CD4-positive, alpha-beta T cell (primary cell): ENCODE measurements at regions of chr3 and their contacts with region 1.

Region 1: DNA sequence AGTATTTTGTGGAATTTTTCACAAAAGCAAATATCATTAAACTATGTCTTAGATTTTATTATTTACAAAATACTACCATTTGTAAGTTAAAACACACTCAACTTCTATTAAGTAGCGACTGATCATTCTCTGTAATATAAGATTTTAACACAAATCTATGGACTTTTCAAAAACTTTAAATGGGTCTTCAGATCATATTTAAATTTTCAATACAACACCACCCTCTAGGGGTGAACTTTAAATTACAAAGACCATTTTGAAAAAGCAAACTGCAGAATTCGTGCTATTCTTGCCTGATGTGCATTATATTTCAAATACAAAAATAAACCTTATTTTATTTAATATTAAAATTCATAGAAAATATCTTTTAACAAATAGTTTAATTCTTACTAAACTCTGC is 8.2 kb upstream of the VGLL4 start:
- DNase-seq: peak in 3 of 14 experiments; percentile 57 to 69 (median 65)
- ATAC-seq: no peak
- H3K4me3 ChIP-seq: no peak overlapping the region
- H3K4me3 Mint-ChIP-seq: no peak overlapping the region
- H3K27ac ChIP-seq: no peak overlapping the region
- H3K27ac Mint-ChIP-seq: no peak overlapping the region
- H3K4me1 ChIP-seq: peaks cover 3% of the 10 kb centered on the region
- H3K4me1 Mint-ChIP-seq: peaks cover 4% of the 10 kb centered on the region
- H3K27me3 ChIP-seq: no peaks in the 10 kb centered on the region
- H3K27me3 Mint-ChIP-seq: no peaks in the 10 kb centered on the region
- CTCF ChIP-seq: peak; percentile 77

Region 2: GRCh38 chr3:10758304-10759061 is 893.4 kb before region 1 on chr3:
- CTCF ChIA-PET with region 1: no interaction called
- POLR2A ChIA-PET with region 1: no interaction called
- intact Hi-C with region 1: loop called in 1 of 2 experiments (anchors 5 kb)
- DNase-seq: peak in 11 of 14 experiments; percentile 11 to 70 (median 33)
- ATAC-seq: peak; percentile 65
- H3K4me3 ChIP-seq: no peak overlapping the region
- H3K4me3 Mint-ChIP-seq: no peak overlapping the region
- H3K27ac ChIP-seq: no peak overlapping the region
- H3K27ac Mint-ChIP-seq: no peak overlapping the region
- H3K4me1 ChIP-seq: no peaks in the 10 kb centered on the region
- H3K4me1 Mint-ChIP-seq: no peaks in the 10 kb centered on the region
- H3K27me3 ChIP-seq: peaks cover 7 to 14% of the 10 kb centered on the region in 2 experiments
- H3K27me3 Mint-ChIP-seq: peaks cover 80% of the 10 kb centered on the region
- CTCF ChIP-seq: peak; percentile 64

Region 3: DNA sequence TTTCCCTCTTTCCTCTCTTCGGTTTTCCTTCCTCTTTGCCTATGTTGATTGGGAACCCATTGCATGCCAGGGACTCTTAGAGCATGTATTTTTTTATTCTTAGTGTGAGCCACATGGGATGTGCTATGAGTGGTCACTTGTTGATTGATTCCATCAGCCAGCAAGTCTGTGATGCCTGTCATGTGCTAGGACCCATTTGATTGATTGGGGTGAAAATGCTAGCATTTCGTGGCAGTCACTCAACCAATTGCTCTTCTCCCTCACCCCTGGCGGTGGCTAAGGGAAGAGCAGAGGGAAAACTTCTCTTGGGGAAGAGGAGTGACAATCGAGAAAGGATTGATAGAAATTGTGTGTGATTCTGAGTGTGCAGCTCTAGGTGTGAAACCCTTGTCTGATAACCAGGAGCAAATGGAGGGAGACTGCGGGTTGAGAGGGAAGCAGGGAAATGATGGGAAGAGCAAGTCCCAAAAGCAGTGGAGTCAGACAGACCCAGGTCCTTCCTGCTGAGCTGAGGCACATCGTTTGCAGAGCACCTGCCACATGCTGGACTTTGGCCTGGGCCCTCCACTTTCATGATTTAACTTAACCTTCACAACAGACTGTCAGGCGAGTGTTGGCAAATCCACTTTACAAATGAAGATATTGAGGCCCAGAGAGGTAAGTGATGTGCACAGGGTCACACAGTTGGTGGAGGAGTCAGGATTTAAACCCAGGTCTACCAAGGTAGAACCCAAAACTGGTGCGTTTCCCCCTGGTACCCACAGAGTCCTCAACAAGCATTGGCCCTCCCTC is 795.8 kb before region 1 on chr3:
- CTCF ChIA-PET with region 1: no interaction called
- POLR2A ChIA-PET with region 1: no interaction called
- intact Hi-C with region 1: no loop called
- DNase-seq: no peak
- ATAC-seq: no peak
- H3K4me3 ChIP-seq: no peak overlapping the region
- H3K4me3 Mint-ChIP-seq: no peak overlapping the region
- H3K27ac ChIP-seq: no peak overlapping the region
- H3K27ac Mint-ChIP-seq: no peak overlapping the region
- H3K4me1 ChIP-seq: no peaks in the 10 kb centered on the region
- H3K4me1 Mint-ChIP-seq: no peaks in the 10 kb centered on the region
- H3K27me3 ChIP-seq: no peaks in the 10 kb centered on the region
- H3K27me3 Mint-ChIP-seq: peaks cover 32% of the 10 kb centered on the region
- CTCF ChIP-seq: no peak

Region 4: GRCh38 chr3:11060500-11061251 is 591.2 kb before region 1 on chr3:
- CTCF ChIA-PET with region 1: no interaction called
- POLR2A ChIA-PET with region 1: no interaction called
- intact Hi-C with region 1: loop called in 1 of 2 experiments (anchors 5 kb)
- DNase-seq: peak in 11 of 14 experiments; percentile 4 to 57 (median 15)
- ATAC-seq: no peak
- H3K4me3 ChIP-seq: no peak overlapping the region
- H3K4me3 Mint-ChIP-seq: no peak overlapping the region
- H3K27ac ChIP-seq: no peak overlapping the region
- H3K27ac Mint-ChIP-seq: no peak overlapping the region
- H3K4me1 ChIP-seq: peaks cover 4% of the 10 kb centered on the region
- H3K4me1 Mint-ChIP-seq: no peaks in the 10 kb centered on the region
- H3K27me3 ChIP-seq: peaks cover 6 to 9% of the 10 kb centered on the region in 2 experiments
- H3K27me3 Mint-ChIP-seq: peaks cover 22% of the 10 kb centered on the region
- CTCF ChIP-seq: peak; percentile 65

Region 5: GRCh38 chr3:11379233-11379823 is 272.6 kb before region 1 on chr3:
- CTCF ChIA-PET with region 1: interaction called, 16 read pairs
- POLR2A ChIA-PET with region 1: interaction called, 3 read pairs
- intact Hi-C with region 1: loop called (anchors 1 kb)
- DNase-seq: peak in 4 of 14 experiments; percentile 19 to 64 (median 52)
- ATAC-seq: peak; percentile 62
- H3K4me3 ChIP-seq: no peak overlapping the region
- H3K4me3 Mint-ChIP-seq: no peak overlapping the region
- H3K27ac ChIP-seq: no peak overlapping the region
- H3K27ac Mint-ChIP-seq: no peak overlapping the region
- H3K4me1 ChIP-seq: no peaks in the 10 kb centered on the region
- H3K4me1 Mint-ChIP-seq: no peaks in the 10 kb centered on the region
- H3K27me3 ChIP-seq: no peaks in the 10 kb centered on the region
- H3K27me3 Mint-ChIP-seq: no peaks in the 10 kb centered on the region
- CTCF ChIP-seq: peak; percentile 61

Region 6: GRCh38 chr3:11705049-11705448 is 53.1 kb after region 1 on chr3:
- CTCF ChIA-PET with region 1: no interaction called
- POLR2A ChIA-PET with region 1: no interaction called
- intact Hi-C with region 1: no loop called
- DNase-seq: no peak
- ATAC-seq: no peak
- H3K4me3 ChIP-seq: peak overlapping the region; percentile 21
- H3K4me3 Mint-ChIP-seq: peak overlapping the region; percentile 68
- H3K27ac ChIP-seq: no peak overlapping the region
- H3K27ac Mint-ChIP-seq: no peak overlapping the region
- H3K4me1 ChIP-seq: no peaks in the 10 kb centered on the region
- H3K4me1 Mint-ChIP-seq: peaks cover 7% of the 10 kb centered on the region
- H3K27me3 ChIP-seq: no peaks in the 10 kb centered on the region
- H3K27me3 Mint-ChIP-seq: no peaks in the 10 kb centered on the region
- CTCF ChIP-seq: no peak

Region 7: DNA sequence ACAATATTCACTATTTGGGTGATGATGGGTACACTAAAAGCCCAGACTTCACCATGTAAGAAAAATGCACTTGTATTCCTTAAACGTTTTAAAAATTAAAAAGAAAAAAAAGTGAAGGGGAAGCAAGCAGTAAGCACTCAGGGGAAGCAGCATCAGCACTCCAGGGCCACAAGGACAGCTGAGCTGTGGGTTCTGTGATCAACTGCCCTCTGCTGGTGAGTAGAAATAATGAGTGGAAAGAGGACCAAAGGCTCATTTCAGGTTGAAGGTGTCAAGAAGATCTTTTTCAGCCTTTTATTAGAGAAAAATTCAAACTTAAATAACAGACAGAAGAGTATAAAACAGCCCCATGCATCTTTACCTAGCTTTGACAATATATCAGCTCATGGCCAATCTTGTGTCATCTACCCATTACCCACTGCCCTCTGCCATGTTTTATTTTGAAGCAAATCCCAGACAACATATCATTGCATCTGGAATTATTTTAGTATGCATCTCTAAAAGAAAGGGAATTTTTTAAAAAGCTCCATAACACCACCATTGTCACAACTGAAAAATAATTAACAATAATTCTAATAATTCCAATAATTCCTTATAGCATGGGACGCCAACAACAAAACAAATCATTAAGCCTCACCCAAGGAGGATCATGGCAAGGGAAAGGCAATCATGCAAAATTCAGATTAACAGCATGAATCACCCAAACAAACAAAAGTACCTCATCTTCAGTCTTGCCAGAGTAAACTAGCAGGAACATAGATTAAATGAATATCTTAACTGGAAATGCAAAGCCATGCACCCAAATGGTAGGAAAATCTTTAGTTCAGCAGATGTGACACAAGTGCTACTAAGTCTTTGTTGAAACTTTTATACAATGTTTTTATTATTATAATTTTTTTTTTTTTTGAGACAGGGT is 152.3 kb after region 1 on chr3:
- CTCF ChIA-PET with region 1: interaction called, 3 read pairs
- POLR2A ChIA-PET with region 1: no interaction called
- intact Hi-C with region 1: loop called (anchors 1 to 2 kb)
- DNase-seq: peak in 11 of 14 experiments; percentile 4 to 75 (median 17)
- ATAC-seq: peak; percentile 91
- H3K4me3 ChIP-seq: no peak overlapping the region
- H3K4me3 Mint-ChIP-seq: no peak overlapping the region
- H3K27ac ChIP-seq: no peak overlapping the region
- H3K27ac Mint-ChIP-seq: no peak overlapping the region
- H3K4me1 ChIP-seq: no peaks in the 10 kb centered on the region
- H3K4me1 Mint-ChIP-seq: peaks cover 10% of the 10 kb centered on the region
- H3K27me3 ChIP-seq: no peaks in the 10 kb centered on the region
- H3K27me3 Mint-ChIP-seq: no peaks in the 10 kb centered on the region
- CTCF ChIP-seq: peak; percentile 74